ENCODE measurements at regions of chr6 and their contacts with region 1.

Region 1: DNA sequence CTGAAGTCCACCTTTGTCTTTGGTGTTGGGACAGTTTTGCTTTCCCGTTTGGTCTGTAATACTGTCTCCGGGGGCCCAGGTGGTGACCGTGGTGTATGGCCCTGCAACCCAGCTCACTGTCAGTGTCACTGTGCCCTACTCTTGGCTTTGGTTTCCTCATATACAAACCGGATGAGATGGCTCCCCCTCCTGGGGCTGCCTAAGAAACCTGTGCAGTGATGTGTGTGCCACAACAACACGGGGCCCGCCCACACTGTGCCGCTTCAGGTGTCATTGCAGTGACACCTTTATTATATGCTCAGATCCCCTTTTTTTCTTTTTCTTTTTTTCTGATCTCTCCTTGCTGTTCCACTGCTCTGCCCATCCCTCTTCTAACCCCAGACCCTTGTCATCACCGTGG is 73.9 kb downstream of the RAMACL start:
- DNase-seq: peak; percentile 79
- ATAC-seq: peak; percentile 96
- H3K4me3 ChIP-seq: no peak overlapping the region
- H3K4me3 Mint-ChIP-seq: peak overlapping the region; percentile 27
- H3K27ac ChIP-seq: peak overlapping the region in 1 of 2 donors; percentile 25
- H3K27ac Mint-ChIP-seq: peak overlapping the region; percentile 84
- H3K4me1 ChIP-seq: peaks cover 13 to 14% of the 10 kb centered on the region in 2 donors
- H3K4me1 Mint-ChIP-seq: peaks cover 17% of the 10 kb centered on the region
- H3K27me3 ChIP-seq: no peaks in the 10 kb centered on the region
- H3K27me3 Mint-ChIP-seq: no peaks in the 10 kb centered on the region
- CTCF ChIP-seq: peak; percentile 25

Region 2: DNA sequence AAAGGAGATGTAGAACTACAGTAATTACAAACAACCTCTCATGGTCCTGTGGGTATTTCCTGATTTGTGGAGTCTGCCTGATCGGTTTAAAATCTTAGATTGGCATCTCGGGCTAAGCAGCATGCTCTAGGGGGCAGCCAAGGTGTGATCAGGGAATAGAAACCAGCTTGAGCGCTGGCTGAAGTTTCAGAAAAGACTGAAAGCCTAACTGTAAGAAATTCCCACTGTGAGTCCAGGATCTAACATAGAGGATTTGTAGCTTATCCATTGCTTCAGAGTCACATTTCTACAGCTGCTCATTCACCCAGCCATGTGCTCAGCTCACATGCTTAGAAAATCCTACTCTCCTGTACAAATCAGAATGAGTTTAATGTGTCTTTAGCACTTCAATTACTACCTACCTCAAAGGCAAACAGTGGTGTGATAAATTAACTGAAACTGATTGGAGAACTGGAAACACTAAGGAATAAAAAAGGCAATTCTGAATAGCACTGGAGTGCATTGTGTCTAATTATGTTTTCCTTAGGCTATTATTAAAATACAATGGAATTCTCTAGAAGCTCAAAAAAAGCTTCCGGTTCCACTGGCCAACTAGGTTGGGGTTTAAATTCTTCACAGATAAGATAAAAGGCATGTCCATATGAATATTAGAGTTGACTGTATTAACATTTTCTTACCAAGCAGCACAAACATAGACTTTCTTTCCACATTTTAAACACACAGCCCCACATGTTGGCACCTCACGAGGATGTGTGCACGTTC is 56.0 kb before region 1 on chr6:
- CTCF ChIA-PET with region 1: interaction called, 5 read pairs
- POLR2A ChIA-PET with region 1: no interaction called
- intact Hi-C with region 1: loop called (anchors 1 kb)
- DNase-seq: peak; percentile 51
- ATAC-seq: peak; percentile 53
- H3K4me3 ChIP-seq: no peak overlapping the region
- H3K4me3 Mint-ChIP-seq: no peak overlapping the region
- H3K27ac ChIP-seq: no peak overlapping the region
- H3K27ac Mint-ChIP-seq: no peak overlapping the region
- H3K4me1 ChIP-seq: peaks cover 12 to 13% of the 10 kb centered on the region in 2 donors
- H3K4me1 Mint-ChIP-seq: peaks cover 18% of the 10 kb centered on the region
- H3K27me3 ChIP-seq: no peaks in the 10 kb centered on the region
- H3K27me3 Mint-ChIP-seq: no peaks in the 10 kb centered on the region
- CTCF ChIP-seq: peak; percentile 29

Region 3: DNA sequence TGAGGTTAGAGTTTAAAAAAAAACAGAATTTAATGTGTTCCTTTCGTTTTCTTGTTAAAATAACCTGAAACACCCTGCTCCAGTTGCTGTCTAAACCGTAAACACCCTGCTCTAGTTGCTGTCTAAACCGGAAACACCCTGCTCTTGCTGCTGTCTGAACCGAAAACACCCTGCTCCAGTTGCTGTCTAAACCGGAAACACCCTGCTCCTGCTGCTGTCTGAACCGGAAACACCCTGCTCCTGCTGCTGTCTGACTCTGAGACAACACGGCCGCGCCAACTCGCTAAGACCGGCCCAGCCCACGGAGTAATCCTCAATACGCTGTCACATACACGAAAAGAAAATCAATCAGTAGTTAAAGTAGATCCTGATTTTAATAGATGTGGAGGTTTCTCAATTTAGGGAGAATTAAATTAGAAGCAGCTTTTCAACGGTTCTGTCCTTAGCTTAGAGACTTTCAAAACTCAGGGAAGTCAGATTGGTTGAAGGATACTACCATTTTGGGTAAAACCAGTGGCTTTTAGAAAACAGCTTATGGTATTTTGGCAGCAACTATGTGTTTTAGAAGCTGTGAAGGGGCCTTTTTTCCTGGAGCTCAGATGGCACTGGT is 24.4 kb before region 1 on chr6:
- CTCF ChIA-PET with region 1: interaction called, 3 read pairs
- POLR2A ChIA-PET with region 1: no interaction called
- intact Hi-C with region 1: loop called (anchors 1 kb)
- DNase-seq: peak; percentile 88
- ATAC-seq: peak; percentile 94
- H3K4me3 ChIP-seq: peak overlapping the region; percentile 8 to 53 (median 28)
- H3K4me3 Mint-ChIP-seq: peak overlapping the region; percentile 77
- H3K27ac ChIP-seq: peak overlapping the region; percentile 89 to 92
- H3K27ac Mint-ChIP-seq: peak overlapping the region; percentile 99
- H3K4me1 ChIP-seq: peaks cover 14 to 17% of the 10 kb centered on the region in 2 donors
- H3K4me1 Mint-ChIP-seq: peaks cover 19% of the 10 kb centered on the region
- H3K27me3 ChIP-seq: no peaks in the 10 kb centered on the region
- H3K27me3 Mint-ChIP-seq: no peaks in the 10 kb centered on the region
- CTCF ChIP-seq: no peak

Region 4: GRCh38 chr6:166540631-166541331 is 28.2 kb after region 1 on chr6:
- CTCF ChIA-PET with region 1: interaction called, 8 read pairs
- POLR2A ChIA-PET with region 1: no interaction called
- intact Hi-C with region 1: loop called (anchors 1 kb)
- DNase-seq: peak; percentile 59
- ATAC-seq: peak; percentile 85
- H3K4me3 ChIP-seq: peak overlapping the region in 4 of 5 experiments; percentile 25 to 55 (median 42)
- H3K4me3 Mint-ChIP-seq: peak overlapping the region; percentile 83
- H3K27ac ChIP-seq: peak overlapping the region; percentile 59 to 73
- H3K27ac Mint-ChIP-seq: peak overlapping the region; percentile 90
- H3K4me1 ChIP-seq: peaks cover 5 to 18% of the 10 kb centered on the region in 2 donors
- H3K4me1 Mint-ChIP-seq: peaks cover 22% of the 10 kb centered on the region
- H3K27me3 ChIP-seq: no peaks in the 10 kb centered on the region
- H3K27me3 Mint-ChIP-seq: no peaks in the 10 kb centered on the region
- CTCF ChIP-seq: no peak

Measured in B cell (primary cell).